B cell (primary cell): ENCODE measurements at regions of chr3 and their contacts with region 1.

Region 1: DNA sequence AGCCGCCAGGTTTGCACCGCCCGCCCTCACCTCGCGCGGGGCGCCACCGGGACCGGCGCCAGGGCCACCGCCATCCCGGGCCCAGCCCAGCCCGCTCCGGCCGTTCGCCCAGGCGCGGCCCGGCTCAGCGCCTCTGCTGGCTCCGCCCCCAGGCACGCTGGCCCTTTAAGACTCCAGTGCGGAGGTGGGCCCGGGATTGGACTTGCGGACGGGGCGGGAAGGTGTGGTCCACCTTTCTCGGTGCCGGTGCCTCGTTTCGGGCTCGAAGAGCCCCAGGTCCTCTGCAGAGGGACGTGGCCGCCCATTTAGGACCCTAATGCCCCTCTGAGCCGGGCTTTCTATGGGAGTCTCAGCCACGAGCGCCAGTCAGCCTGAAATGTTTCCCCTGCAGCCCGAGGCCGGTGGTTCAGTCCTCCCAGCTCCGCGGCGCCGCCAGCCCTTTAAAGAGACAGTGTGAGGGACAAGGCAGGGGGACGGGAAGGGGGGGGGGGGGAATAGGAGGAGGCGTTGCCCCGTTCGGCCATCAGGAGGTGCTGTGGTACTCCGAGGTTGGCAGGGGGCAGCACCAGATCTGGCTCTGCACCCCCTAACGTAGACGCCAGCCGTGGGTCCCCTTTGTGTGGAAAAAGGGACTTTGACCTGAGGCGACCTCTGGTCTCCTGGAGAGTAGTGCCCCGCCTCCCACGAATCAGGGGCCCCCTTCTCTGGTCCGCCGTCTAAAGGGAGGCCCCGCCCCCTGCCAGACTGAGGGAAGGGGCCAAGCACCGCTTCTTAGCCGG is 1.0 kb downstream of the HYAL2 start:
- DNase-seq: peak; percentile 94
- ATAC-seq: peak; percentile 80
- H3K4me3 ChIP-seq: peak overlapping the region; percentile 64 to 95 (median 74)
- H3K4me3 Mint-ChIP-seq: peak overlapping the region; percentile 98
- H3K27ac ChIP-seq: peak overlapping the region; percentile 94 to 96
- H3K27ac Mint-ChIP-seq: peak overlapping the region; percentile 97
- H3K4me1 ChIP-seq: peaks cover 22 to 58% of the 10 kb centered on the region in 2 donors
- H3K4me1 Mint-ChIP-seq: peaks cover 49% of the 10 kb centered on the region
- H3K27me3 ChIP-seq: no peaks in the 10 kb centered on the region
- H3K27me3 Mint-ChIP-seq: no peaks in the 10 kb centered on the region
- CTCF ChIP-seq: peak; percentile 65

Region 2: DNA sequence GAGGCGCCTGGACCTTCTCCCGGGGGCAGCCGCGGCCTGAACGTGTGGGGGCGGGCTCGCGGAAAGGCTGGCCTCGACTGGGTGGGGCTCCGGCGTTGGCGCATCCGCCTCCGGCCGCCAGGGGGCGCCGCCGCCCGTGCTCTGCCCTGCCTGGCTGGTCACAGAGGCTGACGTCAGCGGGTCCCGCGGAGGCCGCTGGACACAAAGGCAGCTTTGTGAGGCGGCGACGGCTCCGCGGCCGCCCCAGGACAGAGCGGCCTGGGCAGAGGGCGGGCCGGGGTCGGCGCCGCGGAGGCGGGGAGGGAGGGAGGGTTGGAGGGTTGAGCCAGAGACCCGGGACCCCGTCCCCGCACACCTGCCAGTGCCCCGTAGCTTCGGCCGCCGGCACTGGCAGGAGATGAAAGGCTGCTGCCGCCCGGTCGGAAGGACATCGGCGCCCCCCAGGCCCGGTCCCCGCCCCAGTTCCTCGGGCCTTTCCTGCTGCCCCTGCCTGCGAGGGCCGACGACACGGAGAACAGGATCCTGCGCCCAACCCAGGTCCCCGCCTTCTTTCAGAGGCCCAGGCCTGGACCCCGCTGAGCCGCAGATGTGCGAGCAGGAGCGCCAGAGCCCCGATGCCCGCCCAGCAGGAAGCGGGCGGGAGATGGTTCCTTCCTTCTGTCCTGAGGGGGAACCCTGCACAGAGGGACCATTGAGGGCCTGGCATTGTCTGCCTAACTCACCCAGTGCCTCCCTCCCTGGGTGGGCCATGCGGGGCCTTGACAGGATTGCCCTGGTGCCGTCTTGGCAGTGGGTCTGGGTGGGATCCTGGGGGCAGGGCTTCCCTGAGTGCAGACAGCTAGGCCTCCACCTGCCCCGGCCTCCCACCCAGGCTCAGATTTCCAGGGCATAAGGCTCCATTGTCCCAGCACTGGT is 61.2 kb before region 1 on chr3:
- CTCF ChIA-PET with region 1: interaction called, 10 read pairs
- POLR2A ChIA-PET with region 1: no interaction called
- intact Hi-C with region 1: no loop called
- DNase-seq: peak; percentile 90
- ATAC-seq: peak; percentile 93
- H3K4me3 ChIP-seq: peak overlapping the region in 4 of 5 experiments; percentile 48 to 58 (median 54)
- H3K4me3 Mint-ChIP-seq: peak overlapping the region; percentile 77
- H3K27ac ChIP-seq: peak overlapping the region; percentile 44 to 79
- H3K27ac Mint-ChIP-seq: peak overlapping the region; percentile 80
- H3K4me1 ChIP-seq: peaks cover 12 to 17% of the 10 kb centered on the region in 2 donors
- H3K4me1 Mint-ChIP-seq: peaks cover 12% of the 10 kb centered on the region
- H3K27me3 ChIP-seq: peaks cover 0 to 5% (median 0%) of the 10 kb centered on the region in 4 experiments
- H3K27me3 Mint-ChIP-seq: no peaks in the 10 kb centered on the region
- CTCF ChIP-seq: peak; percentile 93

Region 3: DNA sequence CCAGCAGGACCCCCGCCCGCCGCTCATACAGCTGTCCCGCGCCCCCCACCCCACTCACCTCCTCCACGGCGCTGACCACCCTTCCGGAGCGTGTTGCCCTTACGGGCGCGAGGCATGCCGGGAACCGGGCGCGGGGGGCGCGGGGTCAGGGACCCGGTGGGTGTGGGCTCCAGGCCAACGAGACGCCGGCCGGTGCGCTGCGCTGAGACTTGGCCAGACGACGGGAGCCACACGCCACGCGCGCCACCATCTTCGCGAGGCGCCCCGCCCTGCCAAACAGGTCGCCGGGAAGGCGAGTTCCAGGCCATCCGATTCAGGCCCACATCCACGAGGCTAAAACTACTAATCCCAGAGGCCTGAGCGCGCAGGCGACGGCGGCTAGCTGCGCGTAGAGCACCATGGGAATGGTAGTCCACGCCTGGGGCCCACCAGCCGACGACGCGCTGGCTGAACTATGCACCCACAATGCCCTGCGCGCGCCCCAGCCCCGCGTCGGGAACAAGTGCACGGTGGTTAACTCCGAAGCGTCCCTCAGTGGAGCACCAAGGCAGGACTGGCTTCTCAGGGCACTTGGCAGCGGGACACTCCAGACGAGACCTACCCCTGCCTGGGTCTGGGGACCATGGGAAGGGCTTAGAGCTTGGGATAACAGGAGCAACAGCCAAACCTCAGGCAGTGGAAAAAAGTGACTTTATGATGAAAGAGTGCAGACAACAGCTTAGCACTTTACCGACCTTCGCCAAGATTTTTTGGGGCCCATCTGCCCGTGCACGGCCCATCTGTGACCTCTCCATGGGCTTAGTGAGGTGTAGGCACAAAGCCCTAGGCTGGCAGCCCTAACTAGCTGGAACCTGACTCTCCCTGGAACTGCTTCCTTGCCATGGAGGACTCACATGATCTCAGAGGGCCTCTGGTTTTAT is 29.1 kb before region 1 on chr3 and contains the start of gene IFRD2:
- CTCF ChIA-PET with region 1: interaction called, 5 read pairs
- POLR2A ChIA-PET with region 1: interaction called, 4 read pairs
- intact Hi-C with region 1: loop called (anchors 1 kb)
- DNase-seq: peak; percentile 97
- ATAC-seq: peak; percentile 99
- H3K4me3 ChIP-seq: peak within 1 kb of the TSS; percentile 56 to 94 (median 81)
- H3K4me3 Mint-ChIP-seq: peak within 1 kb of the TSS; percentile 92
- H3K27ac ChIP-seq: peak within 1 kb of the TSS; percentile 57 to 85
- H3K27ac Mint-ChIP-seq: peak within 1 kb of the TSS; percentile 96
- H3K4me1 ChIP-seq: peaks cover 11 to 17% of the 10 kb centered on the region in 2 donors
- H3K4me1 Mint-ChIP-seq: peaks cover 17% of the 10 kb centered on the region
- H3K27me3 ChIP-seq: no peaks in the 10 kb centered on the region
- H3K27me3 Mint-ChIP-seq: no peaks in the 10 kb centered on the region
- CTCF ChIP-seq: no peak
- total RNA-seq, gene IFRD2: 55.8 and 63.4 TPM in 2 replicates

Region 4: DNA sequence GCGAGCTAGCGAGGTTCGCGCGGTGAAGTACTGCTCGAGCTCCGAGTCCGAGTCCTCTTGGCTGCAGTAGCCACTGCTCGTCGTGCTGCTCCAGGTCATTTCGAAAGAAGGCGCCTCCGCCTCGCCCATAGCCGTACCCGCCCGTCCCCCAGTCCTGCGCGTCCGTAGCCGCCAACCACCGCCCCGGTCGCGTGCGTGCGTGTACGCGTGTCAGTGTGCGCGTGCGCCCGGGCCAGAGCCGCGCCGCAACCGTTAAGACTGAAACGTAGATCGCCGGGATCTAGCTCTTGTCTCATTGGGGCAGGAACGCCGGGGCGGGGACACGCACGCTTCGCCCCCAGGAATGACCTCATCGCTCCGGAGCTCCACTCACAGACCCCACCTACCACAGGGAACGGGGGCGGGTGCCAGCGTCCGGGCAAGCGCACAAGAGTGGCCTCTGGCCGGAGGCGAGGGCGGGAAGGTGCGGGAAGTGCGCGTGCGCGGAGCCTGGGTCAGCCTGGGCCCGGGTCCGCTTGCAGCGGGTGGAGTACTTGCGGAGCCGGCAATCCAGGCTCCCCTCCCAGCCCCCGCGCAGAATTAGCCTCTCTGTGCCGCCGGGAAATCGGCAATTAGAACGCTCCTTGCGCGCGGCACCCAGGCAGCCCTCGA is 15.8 kb after region 1 on chr3:
- CTCF ChIA-PET with region 1: interaction called, 22 read pairs
- POLR2A ChIA-PET with region 1: interaction called, 16 read pairs
- intact Hi-C with region 1: loop called (anchors 2 kb)
- DNase-seq: peak; percentile 97
- ATAC-seq: peak; percentile 84
- H3K4me3 ChIP-seq: peak overlapping the region; percentile 39 to 86 (median 68)
- H3K4me3 Mint-ChIP-seq: peak overlapping the region; percentile 96
- H3K27ac ChIP-seq: peak overlapping the region; percentile 97 to 98
- H3K27ac Mint-ChIP-seq: peak overlapping the region; percentile 99
- H3K4me1 ChIP-seq: peaks cover 37 to 74% of the 10 kb centered on the region in 2 donors
- H3K4me1 Mint-ChIP-seq: peaks cover 55% of the 10 kb centered on the region
- H3K27me3 ChIP-seq: no peaks in the 10 kb centered on the region
- H3K27me3 Mint-ChIP-seq: no peaks in the 10 kb centered on the region
- CTCF ChIP-seq: no peak

Region 5: GRCh38 chr3:50390508-50391224 is 69.1 kb after region 1 on chr3:
- CTCF ChIA-PET with region 1: no interaction called
- POLR2A ChIA-PET with region 1: no interaction called
- intact Hi-C with region 1: no loop called
- DNase-seq: no peak
- ATAC-seq: no peak
- H3K4me3 ChIP-seq: no peak overlapping the region
- H3K4me3 Mint-ChIP-seq: no peak overlapping the region
- H3K27ac ChIP-seq: no peak overlapping the region
- H3K27ac Mint-ChIP-seq: no peak overlapping the region
- H3K4me1 ChIP-seq: no peaks in the 10 kb centered on the region
- H3K4me1 Mint-ChIP-seq: no peaks in the 10 kb centered on the region
- H3K27me3 ChIP-seq: no peaks in the 10 kb centered on the region
- H3K27me3 Mint-ChIP-seq: peaks cover 3% of the 10 kb centered on the region
- CTCF ChIP-seq: no peak

Region 6: DNA sequence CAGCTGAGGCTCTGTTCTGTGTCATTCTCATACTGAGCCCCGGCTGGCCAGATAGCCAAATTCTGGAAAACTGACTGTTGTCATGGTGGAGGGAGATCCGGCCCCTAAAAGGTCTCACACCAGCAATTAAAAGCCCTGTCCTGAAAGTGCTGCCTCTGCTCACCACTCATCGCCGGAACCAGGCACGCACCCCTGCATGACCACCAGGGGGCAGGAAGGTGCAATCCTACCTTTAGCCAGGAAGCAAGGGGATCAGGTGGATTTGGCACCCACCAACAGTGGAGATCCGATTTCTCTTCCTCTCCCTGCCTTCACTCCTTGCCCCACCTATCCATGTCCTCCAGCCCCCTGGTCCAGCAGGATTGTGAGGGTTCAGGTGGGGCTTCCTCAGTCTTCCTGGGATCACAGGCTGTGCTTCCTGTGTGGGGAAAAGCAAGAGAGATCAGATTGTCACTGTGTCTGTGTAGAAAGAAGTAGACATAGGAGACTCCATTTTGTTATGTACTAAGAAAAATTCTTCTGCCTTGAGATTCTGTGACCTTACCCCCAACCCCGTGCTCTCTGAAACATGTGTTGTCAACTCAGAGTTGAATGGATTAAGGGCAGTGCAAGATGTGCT is 198.1 kb after region 1 on chr3:
- CTCF ChIA-PET with region 1: no interaction called
- POLR2A ChIA-PET with region 1: no interaction called
- intact Hi-C with region 1: no loop called
- DNase-seq: peak; percentile 74
- ATAC-seq: peak; percentile 58
- H3K4me3 ChIP-seq: no peak overlapping the region
- H3K4me3 Mint-ChIP-seq: no peak overlapping the region
- H3K27ac ChIP-seq: no peak overlapping the region
- H3K27ac Mint-ChIP-seq: peak overlapping the region; percentile 33
- H3K4me1 ChIP-seq: peaks cover 26 to 34% of the 10 kb centered on the region in 2 donors
- H3K4me1 Mint-ChIP-seq: peaks cover 32% of the 10 kb centered on the region
- H3K27me3 ChIP-seq: peaks cover 0 to 4% (median 0%) of the 10 kb centered on the region in 4 experiments
- H3K27me3 Mint-ChIP-seq: peaks cover 5% of the 10 kb centered on the region
- CTCF ChIP-seq: peak; percentile 89